Dendritic cell treated with granulocyte-macrophage colony-stimulating factor and Interleukin-4, amounts not matched to agents 40 ng/mL and 50 ng/mL, for 4 days (primary cell): ENCODE measurements at regions of chr13 and their contacts with region 1.

Region 1: DNA sequence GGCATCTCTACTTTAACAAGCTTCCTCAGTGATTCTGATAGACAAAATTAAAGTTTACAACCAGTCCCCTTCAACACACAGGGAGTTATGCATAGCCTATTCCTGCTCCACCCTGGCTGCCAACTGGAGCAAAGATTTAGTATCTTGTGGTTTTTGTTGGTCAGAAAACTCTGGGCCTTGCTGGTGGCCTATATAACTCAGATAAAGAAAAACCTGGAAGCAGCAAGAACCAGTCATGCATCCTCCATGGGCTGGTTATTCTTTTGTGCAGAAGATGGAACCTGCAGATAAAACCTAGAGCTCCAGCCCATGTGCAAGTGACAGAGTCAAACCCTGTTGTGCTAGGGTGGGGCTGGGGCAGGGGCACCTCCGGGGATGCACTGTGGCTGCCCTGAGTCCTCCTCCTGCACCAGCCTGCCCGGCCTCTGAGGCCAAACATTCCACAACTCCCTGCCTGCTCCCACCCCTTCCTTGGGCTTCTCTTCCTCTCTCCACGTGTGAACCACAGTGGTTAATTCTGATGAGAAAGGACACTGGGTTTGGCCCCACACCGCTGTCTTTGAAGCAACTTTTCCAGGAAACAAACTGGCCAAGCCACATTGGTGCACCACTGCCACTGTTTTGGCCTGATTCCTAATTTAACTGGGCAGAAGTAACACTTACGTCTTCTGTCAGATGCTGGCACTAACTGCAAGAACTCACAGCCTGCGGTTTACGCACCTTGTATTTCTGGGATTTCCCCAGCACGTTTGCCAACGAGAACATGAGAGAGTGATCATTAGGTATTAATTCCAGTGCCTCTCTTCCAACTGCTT is 23.3 kb upstream of the GGACT start:
- H3K4me3 Mint-ChIP-seq: no peak overlapping the region
- H3K27ac Mint-ChIP-seq: peak overlapping the region; percentile 28
- H3K4me1 Mint-ChIP-seq: peaks cover 50% of the 10 kb centered on the region
- H3K27me3 Mint-ChIP-seq: no peaks in the 10 kb centered on the region

Region 2: GRCh38 chr13:100244431-100244830 is 367.5 kb before region 1 on chr13:
- intact Hi-C with region 1: no loop called
- H3K4me3 Mint-ChIP-seq: no peak overlapping the region
- H3K27ac Mint-ChIP-seq: no peak overlapping the region
- H3K4me1 Mint-ChIP-seq: no peaks in the 10 kb centered on the region
- H3K27me3 Mint-ChIP-seq: no peaks in the 10 kb centered on the region

Region 3: GRCh38 chr13:100674848-100675660 is 63.2 kb after region 1 on chr13:
- intact Hi-C with region 1: loop called (anchors 10 kb)
- H3K4me3 Mint-ChIP-seq: peak overlapping the region; percentile 87
- H3K27ac Mint-ChIP-seq: peak overlapping the region; percentile 86
- H3K4me1 Mint-ChIP-seq: peaks cover 38% of the 10 kb centered on the region
- H3K27me3 Mint-ChIP-seq: peaks cover 17% of the 10 kb centered on the region

Region 4: GRCh38 chr13:100689191-100689590 is 77.3 kb after region 1 on chr13:
- intact Hi-C with region 1: no loop called
- H3K4me3 Mint-ChIP-seq: no peak overlapping the region
- H3K27ac Mint-ChIP-seq: no peak overlapping the region
- H3K4me1 Mint-ChIP-seq: no peaks in the 10 kb centered on the region
- H3K27me3 Mint-ChIP-seq: peaks cover 3% of the 10 kb centered on the region